H1 (cell line): ENCODE measurements at regions of chr10 and their contacts with region 1.

Region 1: GRCh38 chr10:44733501-44734488 is 177.3 kb upstream of the TMEM72 start:
- DNase-seq: no peak
- H3K4me3 ChIP-seq: no peak overlapping the region
- H3K27ac ChIP-seq: no peak overlapping the region
- H3K4me1 ChIP-seq: peaks cover 0 to 2% (median 0%) of the 10 kb centered on the region in 4 experiments; a peak in 1 of 7 replicates
- H3K27me3 ChIP-seq: no peaks in the 10 kb centered on the region
- CTCF ChIP-seq: peak; percentile 39 to 58 (median 52)
- EP300 ChIP-seq: no peak
- POLR2A ChIP-seq: no peak
- RAD21 ChIP-seq: peak; percentile 33 to 60

Region 2: GRCh38 chr10:44619975-44620374 is 113.8 kb before region 1 on chr10:
- CTCF ChIA-PET with region 1: no interaction called
- POLR2A ChIA-PET with region 1: no interaction called
- DNase-seq: no peak
- H3K4me3 ChIP-seq: no peak overlapping the region
- H3K27ac ChIP-seq: no peak overlapping the region
- H3K4me1 ChIP-seq: no peaks in the 10 kb centered on the region
- H3K27me3 ChIP-seq: no peaks in the 10 kb centered on the region
- CTCF ChIP-seq: no peak
- EP300 ChIP-seq: no peak
- POLR2A ChIP-seq: no peak
- RAD21 ChIP-seq: no peak

Region 3: DNA sequence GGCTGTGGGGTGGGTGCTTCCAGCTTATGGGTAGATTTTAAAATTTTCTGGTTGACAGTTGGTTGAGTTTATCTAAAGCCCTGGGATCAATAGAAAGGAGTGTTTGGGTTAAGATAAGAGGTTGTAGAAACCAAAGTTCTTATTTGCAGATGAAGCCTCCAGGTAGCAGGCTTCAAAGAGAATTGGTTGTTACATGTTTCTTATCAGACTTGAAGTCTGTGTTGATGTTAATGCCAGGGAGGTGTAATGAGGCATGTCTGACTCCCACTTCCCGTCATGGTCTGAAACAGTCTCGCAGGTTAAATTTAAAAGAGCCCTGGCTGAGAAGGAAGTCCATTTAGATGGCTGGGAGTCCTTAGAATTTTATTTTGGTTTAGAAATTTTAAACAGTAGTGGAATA is 12.1 kb after region 1 on chr10:
- CTCF ChIA-PET with region 1: interaction called, 12 read pairs
- POLR2A ChIA-PET with region 1: no interaction called
- DNase-seq: no peak
- H3K4me3 ChIP-seq: no peak overlapping the region
- H3K27ac ChIP-seq: no peak overlapping the region
- H3K4me1 ChIP-seq: no peaks in the 10 kb centered on the region
- H3K27me3 ChIP-seq: no peaks in the 10 kb centered on the region
- CTCF ChIP-seq: no peak
- EP300 ChIP-seq: no peak
- POLR2A ChIP-seq: no peak
- RAD21 ChIP-seq: no peak

Region 4: GRCh38 chr10:44857363-44858016 is 123.7 kb after region 1 on chr10:
- CTCF ChIA-PET with region 1: interaction called, 20 read pairs
- POLR2A ChIA-PET with region 1: no interaction called
- DNase-seq: peak; percentile 89 to 97
- H3K4me3 ChIP-seq: no peak overlapping the region
- H3K27ac ChIP-seq: no peak overlapping the region
- H3K4me1 ChIP-seq: peaks cover 0 to 7% (median 5%) of the 10 kb centered on the region in 4 experiments; a peak in 6 of 7 replicates
- H3K27me3 ChIP-seq: peaks cover 0 to 3% (median 1%) of the 10 kb centered on the region in 4 experiments; a peak in 5 of 7 replicates
- CTCF ChIP-seq: peak; percentile 91 to 99 (median 97)
- EP300 ChIP-seq: peak in 1 of 2 experiments; percentile 53; a peak in 1 of 3 replicates
- POLR2A ChIP-seq: no peak
- RAD21 ChIP-seq: peak; percentile 95 to 98

Region 5: DNA sequence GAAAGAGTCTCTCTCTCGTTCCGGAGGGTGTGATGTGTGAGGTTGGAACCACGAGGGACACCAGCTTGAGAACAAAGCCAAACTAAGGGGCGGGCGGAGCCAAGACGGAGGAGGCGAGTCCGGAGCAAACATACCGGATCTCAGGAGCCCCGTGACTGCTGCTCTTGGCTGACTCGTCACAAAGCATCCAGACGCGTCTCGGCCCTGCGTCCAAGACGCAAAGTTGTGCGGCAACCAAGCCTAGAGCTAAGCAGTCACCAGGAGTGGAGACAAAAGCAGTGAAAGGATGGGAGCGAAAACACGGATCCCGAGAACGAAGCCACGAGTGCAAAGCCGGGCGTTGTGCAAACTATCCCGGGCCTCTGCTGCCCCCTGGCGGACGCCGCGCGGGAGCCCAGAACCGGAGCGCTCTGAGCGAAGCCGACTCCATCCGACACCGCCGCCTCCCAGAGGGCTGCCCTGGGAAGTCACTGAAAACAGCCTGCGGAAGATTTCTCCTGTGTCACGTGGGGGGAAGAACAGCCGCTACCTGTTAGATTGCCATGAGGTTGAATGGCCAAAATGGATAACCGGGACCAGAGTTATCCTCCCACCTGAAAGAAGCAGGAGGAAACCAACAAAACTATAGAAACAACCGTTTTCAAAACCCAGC is 131.0 kb after region 1 on chr10:
- CTCF ChIA-PET with region 1: interaction called, 20 read pairs
- POLR2A ChIA-PET with region 1: no interaction called
- DNase-seq: peak; percentile 51 to 99
- H3K4me3 ChIP-seq: peak overlapping the region; percentile 36 to 61 (median 59); a peak in 7 of 8 replicates
- H3K27ac ChIP-seq: no peak overlapping the region
- H3K4me1 ChIP-seq: peaks cover 2 to 17% (median 8%) of the 10 kb centered on the region in 4 experiments; a peak in 6 of 7 replicates
- H3K27me3 ChIP-seq: peaks cover 6 to 38% (median 31%) of the 10 kb centered on the region in 4 experiments
- CTCF ChIP-seq: peak; percentile 77 to 97 (median 86)
- EP300 ChIP-seq: no peak
- POLR2A ChIP-seq: peak; percentile 47 to 59; a peak in 2 of 3 replicates
- RAD21 ChIP-seq: peak; percentile 78 to 84